Mucosa of descending colon (tissue), 3 donors: ENCODE measurements at regions of chr10 and their contacts with region 1.

Region 1: DNA sequence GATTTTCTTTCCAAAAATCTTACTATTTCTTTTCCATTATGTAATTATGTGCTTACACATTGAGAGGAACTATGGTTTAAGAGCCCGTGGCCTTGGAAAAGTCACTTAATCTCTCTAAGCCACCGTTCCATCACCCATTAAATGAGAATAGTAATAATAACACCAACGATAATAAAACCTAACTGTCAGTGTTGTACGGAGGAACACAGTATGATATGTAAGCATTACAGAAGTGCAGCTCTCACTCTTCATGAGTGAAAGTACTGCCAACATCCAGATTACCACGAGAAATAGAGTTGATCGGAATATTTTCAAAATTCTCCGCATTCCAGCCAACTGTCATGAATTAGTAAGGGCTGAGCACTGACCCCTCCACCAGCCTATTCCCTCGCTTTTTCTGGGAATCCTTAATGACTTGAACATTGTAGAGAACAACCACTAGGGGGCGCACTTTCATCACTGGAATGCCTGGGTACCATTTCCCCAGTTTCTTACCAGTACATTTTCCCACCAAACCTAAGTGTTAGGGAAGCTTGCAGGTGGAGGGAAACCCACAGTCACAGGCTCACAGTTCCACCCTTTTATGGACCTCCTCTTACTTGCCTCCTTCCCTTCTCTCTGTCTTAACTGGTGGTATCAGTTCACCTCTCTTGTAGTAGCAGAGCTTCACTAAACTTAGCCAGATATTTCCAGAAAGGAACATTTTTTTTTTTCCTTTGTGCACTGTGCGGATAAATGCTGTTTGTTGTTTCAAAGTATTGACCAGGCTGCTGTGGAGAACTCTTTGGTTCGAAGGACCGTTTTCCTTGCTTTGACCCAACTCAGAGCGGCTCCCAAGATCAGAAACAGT is 27.8 kb downstream of the NKX2-3 start:
- DNase-seq: peak in 1 of 3 donors; percentile 81
- ATAC-seq: peak; percentile 83
- H3K4me3 ChIP-seq: no peak overlapping the region
- H3K4me1 ChIP-seq: no peaks in the 10 kb centered on the region
- CTCF ChIP-seq: peak; percentile 45

Region 2: DNA sequence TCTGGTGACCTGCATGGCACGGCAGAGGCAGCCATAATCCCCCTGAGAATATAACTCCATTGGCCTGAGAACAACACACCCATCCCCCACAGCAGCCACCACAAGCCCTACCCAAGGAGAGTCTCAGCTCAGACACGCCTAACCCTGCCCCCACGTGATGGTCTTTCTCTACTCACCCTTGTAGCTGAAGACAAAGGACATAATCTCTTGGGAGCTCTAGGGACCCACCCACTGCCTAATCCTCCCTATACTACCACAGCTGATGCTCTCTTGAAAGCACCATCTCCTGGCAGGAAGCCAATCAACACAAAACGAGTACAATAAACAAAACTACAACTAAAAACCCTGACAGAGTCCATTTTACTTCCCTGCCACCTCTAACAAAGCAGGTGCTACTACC is 294.1 kb before region 1 on chr10:
- intact Hi-C with region 1: no loop called
- DNase-seq: no peak
- ATAC-seq: no peak
- H3K4me3 ChIP-seq: no peak overlapping the region
- H3K4me1 ChIP-seq: no peaks in the 10 kb centered on the region
- CTCF ChIP-seq: no peak

Region 3: DNA sequence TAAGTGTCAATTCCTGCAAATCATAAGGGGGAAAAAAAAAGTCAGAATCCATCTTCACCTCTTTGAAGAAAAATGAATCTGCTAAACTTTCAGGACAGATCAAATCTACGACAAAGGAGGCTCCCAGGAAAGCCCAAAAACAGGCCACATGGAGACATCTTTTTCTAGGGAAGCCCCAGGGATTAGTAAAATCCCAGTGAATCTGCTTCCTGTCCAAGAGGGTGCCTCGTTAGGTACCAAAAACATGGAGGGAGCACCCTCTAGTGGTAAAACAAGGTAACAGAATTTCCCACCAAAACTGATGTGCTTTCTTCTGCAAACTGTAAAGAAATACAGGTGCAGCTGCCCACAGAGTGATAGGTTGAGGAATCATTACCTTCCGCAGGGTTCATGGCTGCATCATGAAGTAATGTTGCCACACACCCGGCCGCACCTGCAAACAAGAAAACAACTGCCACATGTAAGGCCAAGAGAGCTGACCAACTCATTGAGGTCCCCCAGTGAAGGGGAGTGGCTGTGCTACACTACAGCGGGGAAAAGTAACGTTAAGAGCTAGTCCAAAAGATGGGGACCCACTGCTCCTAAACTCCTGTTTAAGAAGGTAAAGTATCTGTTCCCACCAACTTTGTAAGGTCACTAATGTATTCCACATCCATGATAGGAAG is 51.8 kb after region 1 on chr10:
- intact Hi-C with region 1: loop called in 1 of 2 experiments (anchors 2 kb)
- DNase-seq: peak in 1 of 3 donors; percentile 67
- ATAC-seq: peak; percentile 89
- H3K4me3 ChIP-seq: no peak overlapping the region
- H3K4me1 ChIP-seq: no peaks in the 10 kb centered on the region
- CTCF ChIP-seq: peak; percentile 58